Ascending aorta (tissue), 2 donors: ENCODE measurements at regions of chr15 and their contacts with region 1.

Region 1: DNA sequence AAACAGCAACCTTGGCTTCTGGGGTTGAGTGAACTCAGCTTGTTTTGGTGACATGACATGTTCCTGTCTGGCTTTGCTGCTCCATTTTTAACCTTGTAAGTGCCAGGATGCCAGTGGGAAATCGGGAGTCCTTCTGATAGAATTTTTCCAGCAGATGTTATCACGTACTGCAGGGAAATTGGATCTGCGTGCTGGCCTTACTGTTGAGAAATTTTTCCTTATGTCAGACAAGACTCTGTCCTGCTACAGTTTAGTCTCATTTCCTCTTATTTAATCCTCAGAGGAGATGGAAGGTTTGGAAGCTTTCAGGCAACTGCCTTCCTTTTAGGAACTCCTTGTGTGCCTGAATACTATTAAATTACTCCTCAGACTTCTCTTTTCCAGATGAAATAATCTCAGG is 80.6 kb downstream of the PGPEP1L start:
- DNase-seq: no peak
- H3K4me3 ChIP-seq: no peak overlapping the region
- H3K27ac ChIP-seq: peak overlapping the region; percentile 64 to 70
- H3K4me1 ChIP-seq: peaks cover 4 to 32% of the 10 kb centered on the region in 2 donors
- H3K27me3 ChIP-seq: no peaks in the 10 kb centered on the region
- CTCF ChIP-seq: no peak

Region 2: DNA sequence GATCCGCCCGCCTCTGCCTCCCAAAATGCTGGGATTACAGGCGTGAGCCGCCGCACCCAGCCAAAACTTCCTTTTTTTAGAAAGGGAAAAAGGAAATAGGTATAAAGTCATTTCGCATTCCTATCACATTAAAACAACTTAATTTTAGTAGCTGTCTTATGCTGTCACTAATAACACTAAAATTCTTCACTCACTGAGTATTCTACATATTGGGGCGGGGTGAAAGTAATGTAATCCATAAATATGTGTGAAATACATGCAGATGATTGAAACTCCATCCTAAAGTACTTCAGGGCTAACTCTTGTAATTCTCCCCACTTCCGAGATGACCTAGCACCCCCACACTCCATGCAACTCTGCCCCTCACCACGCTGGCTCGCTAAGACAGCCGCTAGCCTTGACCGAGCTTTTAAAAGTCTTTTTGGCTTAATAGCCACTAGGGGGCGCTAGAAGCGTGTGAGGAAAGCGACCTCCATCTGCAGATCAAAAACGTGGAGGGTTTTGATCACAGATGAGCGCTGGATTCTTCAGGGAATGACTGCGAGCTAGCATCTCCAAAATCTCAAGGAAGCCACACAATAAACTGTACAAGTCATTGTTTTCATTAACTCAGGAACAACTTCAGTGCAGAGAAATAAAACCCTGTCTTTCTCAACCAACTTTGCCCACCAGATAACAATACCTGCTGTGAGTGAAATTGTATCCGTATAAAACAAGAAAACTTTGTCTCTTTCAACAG is 408.0 kb before region 1 on chr15:
- intact Hi-C with region 1: loop called (anchors 10 kb)
- DNase-seq: no peak
- H3K4me3 ChIP-seq: no peak overlapping the region
- H3K27ac ChIP-seq: no peak overlapping the region
- H3K4me1 ChIP-seq: peaks cover 0 to 2% of the 10 kb centered on the region in 2 donors
- H3K27me3 ChIP-seq: no peaks in the 10 kb centered on the region
- CTCF ChIP-seq: peak; percentile 71 to 92 (median 78)

Region 3: DNA sequence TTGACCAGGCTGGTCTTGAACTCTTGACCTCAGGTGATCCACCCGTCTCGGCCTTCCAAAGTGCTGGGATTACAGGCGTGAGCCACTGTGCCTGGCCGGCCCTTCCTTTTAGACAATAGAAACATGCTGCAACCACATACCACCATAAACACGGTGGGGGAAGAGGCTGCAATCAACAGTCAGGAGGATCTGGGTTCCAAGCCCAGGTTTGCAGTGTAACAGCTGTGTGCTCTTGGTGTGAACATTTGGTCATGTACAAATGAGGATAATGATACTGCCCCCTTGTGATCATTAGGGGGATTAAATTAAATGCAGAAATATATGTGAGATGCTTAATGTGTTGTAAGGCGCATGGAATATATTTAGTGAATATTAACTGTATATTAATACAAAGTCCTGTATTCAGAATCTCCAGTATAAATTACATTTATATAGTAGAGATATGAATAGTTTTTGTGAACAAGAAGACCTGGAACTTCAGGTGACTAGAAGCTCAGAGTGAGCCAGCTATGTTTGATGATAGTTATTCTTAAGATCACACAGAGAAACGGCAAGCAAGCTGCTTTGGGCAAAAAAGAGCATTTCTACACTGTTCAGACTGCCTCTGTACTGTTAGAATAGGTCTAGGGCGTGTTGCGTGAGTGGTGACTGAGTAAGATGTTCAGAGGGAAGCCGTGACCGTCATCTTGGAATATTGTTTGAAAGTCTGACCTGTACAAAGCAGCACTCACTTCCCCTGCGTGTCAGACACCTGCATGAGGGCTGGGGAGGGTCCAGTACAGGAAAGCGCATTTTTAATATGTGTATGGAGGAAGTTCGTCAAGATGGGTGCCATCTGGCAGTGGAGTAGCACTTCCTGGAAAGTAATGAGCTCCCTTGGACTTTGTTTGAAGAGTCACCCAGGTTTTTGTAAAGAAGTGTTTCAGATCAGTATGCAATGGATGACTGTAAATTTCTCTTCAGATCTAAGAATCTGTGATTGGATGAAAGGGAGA is 45.2 kb before region 1 on chr15:
- intact Hi-C with region 1: no loop called
- DNase-seq: no peak
- H3K4me3 ChIP-seq: no peak overlapping the region
- H3K27ac ChIP-seq: peak overlapping the region; percentile 76 to 86
- H3K4me1 ChIP-seq: peaks cover 20 to 60% of the 10 kb centered on the region in 2 donors
- H3K27me3 ChIP-seq: no peaks in the 10 kb centered on the region
- CTCF ChIP-seq: peak; percentile 38 to 60 (median 38)